CD14-positive monocyte (primary cell): ENCODE measurements at regions of chr20 and their contacts with region 1.

Region 1: DNA sequence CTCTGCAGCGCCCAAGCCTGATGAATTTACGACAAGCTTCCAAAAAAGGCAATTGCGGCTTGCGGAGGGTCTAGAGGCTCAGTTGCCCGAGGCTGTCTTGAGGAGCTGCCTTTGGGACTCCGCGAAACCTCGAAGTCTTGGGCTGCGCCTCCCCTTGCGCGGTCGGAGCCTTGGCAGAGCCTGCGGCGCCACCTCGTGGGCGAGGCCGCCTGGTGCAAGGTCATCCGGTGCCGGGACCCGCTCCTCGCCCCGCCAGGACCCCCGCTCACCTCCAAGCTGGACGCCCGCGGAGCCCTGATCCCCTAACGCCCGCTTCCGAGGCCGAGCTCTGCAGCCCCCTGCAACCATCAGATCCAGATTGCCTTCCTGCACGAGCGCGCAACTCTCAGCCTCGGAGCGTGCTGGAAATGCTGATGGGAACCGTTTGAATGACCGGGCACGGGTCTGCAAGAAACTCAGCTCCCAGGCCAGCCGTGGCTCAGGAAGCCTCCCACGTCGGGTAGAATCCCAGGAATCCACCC is 14.9 kb upstream of the FAM210B start:
- DNase-seq: peak in 2 of 3 donors; percentile 7 to 13
- H3K4me3 ChIP-seq: no peak overlapping the region
- H3K4me3 Mint-ChIP-seq: peak overlapping the region in 1 of 2 donors; percentile 76
- H3K27ac ChIP-seq: no peak overlapping the region
- H3K27ac Mint-ChIP-seq: no peak overlapping the region
- H3K4me1 ChIP-seq: no peaks in the 10 kb centered on the region
- H3K4me1 Mint-ChIP-seq: peaks cover 9% of the 10 kb centered on the region
- H3K27me3 ChIP-seq: peaks cover 17 to 46% of the 10 kb centered on the region in 2 donors
- H3K27me3 Mint-ChIP-seq: peaks cover 42 to 67% (median 54%) of the 10 kb centered on the region in 3 donors
- CTCF ChIP-seq: peak; percentile 73

Region 2: GRCh38 chr20:54678253-54678652 is 1665.7 kb before region 1 on chr20:
- intact Hi-C with region 1: loop called in 1 of 2 experiments (anchors 10 kb)
- DNase-seq: no peak
- H3K4me3 ChIP-seq: no peak overlapping the region
- H3K4me3 Mint-ChIP-seq: no peak overlapping the region
- H3K27ac ChIP-seq: no peak overlapping the region
- H3K27ac Mint-ChIP-seq: no peak overlapping the region
- H3K4me1 ChIP-seq: no peaks in the 10 kb centered on the region
- H3K4me1 Mint-ChIP-seq: no peaks in the 10 kb centered on the region
- H3K27me3 ChIP-seq: peaks cover 0 to 2% of the 10 kb centered on the region in 2 donors
- H3K27me3 Mint-ChIP-seq: peaks cover 8 to 15% (median 13%) of the 10 kb centered on the region in 3 donors
- CTCF ChIP-seq: no peak

Region 3: GRCh38 chr20:56285491-56285890 is 58.4 kb before region 1 on chr20:
- intact Hi-C with region 1: no loop called
- DNase-seq: no peak
- H3K4me3 ChIP-seq: no peak overlapping the region
- H3K4me3 Mint-ChIP-seq: no peak overlapping the region
- H3K27ac ChIP-seq: no peak overlapping the region
- H3K27ac Mint-ChIP-seq: no peak overlapping the region
- H3K4me1 ChIP-seq: no peaks in the 10 kb centered on the region
- H3K4me1 Mint-ChIP-seq: no peaks in the 10 kb centered on the region
- H3K27me3 ChIP-seq: no peaks in the 10 kb centered on the region
- H3K27me3 Mint-ChIP-seq: peaks cover 0 to under 1% (median 0%) of the 10 kb centered on the region in 3 donors
- CTCF ChIP-seq: no peak